PC-9 (cell line): ENCODE measurements at regions of chr3 and their contacts with region 1.

Region 1: GRCh38 chr3:32177702-32178198 is 60.7 kb upstream of the CMTM8 start:
- DNase-seq: peak; percentile 67 to 69
- H3K4me3 ChIP-seq: no peak overlapping the region
- H3K27ac ChIP-seq: no peak overlapping the region
- H3K4me1 ChIP-seq: no peaks in the 10 kb centered on the region
- H3K27me3 ChIP-seq: no peaks in the 10 kb centered on the region
- CTCF ChIP-seq: peak; percentile 58

Region 2: GRCh38 chr3:32238453-32239306 is 60.9 kb after region 1 on chr3 and contains the start of gene CMTM8:
- CTCF ChIA-PET with region 1: interaction called, 4 read pairs
- POLR2A ChIA-PET with region 1: no interaction called
- intact Hi-C with region 1: loop called (anchors 2 kb)
- DNase-seq: peak; percentile 37 to 70
- H3K4me3 ChIP-seq: peak within 1 kb of the TSS; percentile 72
- H3K27ac ChIP-seq: no peak within 1 kb of the TSS
- H3K4me1 ChIP-seq: peaks cover 17% of the 10 kb centered on the region; the same call in 1 of the 2 replicates
- H3K27me3 ChIP-seq: no peaks in the 10 kb centered on the region
- CTCF ChIP-seq: no peak
- total RNA-seq, gene CMTM8: 16.8 and 17.8 TPM in 2 replicates

Region 3: GRCh38 chr3:32296256-32297204 is 118.8 kb after region 1 on chr3:
- CTCF ChIA-PET with region 1: no interaction called
- POLR2A ChIA-PET with region 1: no interaction called
- intact Hi-C with region 1: loop called (anchors 1 kb)
- DNase-seq: peak in 1 of 2 experiments; percentile 51
- H3K4me3 ChIP-seq: no peak overlapping the region
- H3K27ac ChIP-seq: no peak overlapping the region
- H3K4me1 ChIP-seq: peaks cover 33% of the 10 kb centered on the region
- H3K27me3 ChIP-seq: no peaks in the 10 kb centered on the region
- CTCF ChIP-seq: peak; percentile 80

Region 4: GRCh38 chr3:32374788-32375595 is 197.2 kb after region 1 on chr3:
- CTCF ChIA-PET with region 1: interaction called, 3 read pairs
- POLR2A ChIA-PET with region 1: no interaction called
- intact Hi-C with region 1: loop called (anchors 1 kb)
- DNase-seq: peak in 1 of 2 experiments; percentile 44
- H3K4me3 ChIP-seq: no peak overlapping the region
- H3K27ac ChIP-seq: no peak overlapping the region
- H3K4me1 ChIP-seq: no peaks in the 10 kb centered on the region
- H3K27me3 ChIP-seq: no peaks in the 10 kb centered on the region
- CTCF ChIP-seq: peak; percentile 67

Region 5: DNA sequence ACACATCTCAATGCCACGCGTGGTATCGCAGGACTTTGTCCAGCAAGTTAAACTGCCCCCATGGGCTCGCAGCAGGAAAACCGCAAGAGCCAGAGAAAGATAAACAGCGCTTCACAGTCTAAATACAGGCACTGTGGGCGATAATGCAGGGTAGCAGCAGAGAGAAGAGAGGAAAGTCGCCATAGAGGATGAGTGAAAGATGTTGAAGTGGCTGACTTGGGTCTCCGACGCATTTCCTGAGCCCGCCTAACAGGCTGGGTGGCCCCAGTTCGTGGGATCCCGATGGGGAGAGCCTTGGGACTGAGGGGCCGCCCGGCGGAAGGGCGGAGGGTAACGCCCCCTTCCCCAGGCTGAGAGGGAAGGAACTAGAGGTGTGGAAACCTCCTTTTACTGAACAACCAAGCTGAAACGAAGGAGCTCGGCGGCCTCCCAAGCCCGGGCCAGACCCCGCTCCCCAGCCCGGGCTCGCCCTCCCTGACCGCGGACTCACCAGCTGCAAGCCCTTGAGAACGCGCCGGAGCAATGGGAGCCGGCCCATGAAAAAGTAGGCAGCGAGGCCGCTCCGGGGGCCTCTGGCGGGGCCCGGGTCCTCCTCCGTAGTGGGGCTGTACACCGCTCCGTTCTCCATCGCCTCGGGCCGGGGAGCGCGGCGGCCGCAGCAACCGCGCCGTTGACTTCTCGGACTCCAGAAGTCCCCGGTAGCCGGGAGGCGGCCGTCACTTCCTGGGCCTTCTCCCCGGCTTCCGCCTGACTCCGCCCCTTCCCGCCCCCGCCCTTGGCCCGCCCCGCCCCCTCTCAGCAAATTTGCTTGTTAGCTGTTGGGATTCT is 324.6 kb after region 1 on chr3 and contains the start of gene CMTM6:
- CTCF ChIA-PET with region 1: interaction called, 4 read pairs
- POLR2A ChIA-PET with region 1: no interaction called
- intact Hi-C with region 1: loop called (anchors 2 kb)
- DNase-seq: peak; percentile 39 to 67
- H3K4me3 ChIP-seq: peak within 1 kb of the TSS; percentile 79
- H3K27ac ChIP-seq: peak within 1 kb of the TSS; percentile 51
- H3K4me1 ChIP-seq: peaks cover 8% of the 10 kb centered on the region; the same call in 1 of the 2 replicates
- H3K27me3 ChIP-seq: no peaks in the 10 kb centered on the region
- CTCF ChIP-seq: no peak
- total RNA-seq, gene CMTM6: 61.0 and 69.4 TPM in 2 replicates